ENCODE measurements at regions of chr22 and their contacts with region 1.

Region 1: GRCh38 chr22:41832553-41833368 is at the start of gene SREBF2:
- DNase-seq: peak; percentile 93 to 99 (median 97)
- ATAC-seq: peak; percentile 96
- H3K4me3 ChIP-seq: peak within 1 kb of the TSS; percentile 99
- H3K4me3 Mint-ChIP-seq: peak within 1 kb of the TSS; percentile 90 to 98 (median 95)
- H3K27ac ChIP-seq: peak within 1 kb of the TSS; percentile 97
- H3K27ac Mint-ChIP-seq: peak within 1 kb of the TSS; percentile 94 to 100 (median 99)
- H3K4me1 ChIP-seq: peaks cover 0 to 10% of the 10 kb centered on the region in 2 donors
- H3K4me1 Mint-ChIP-seq: peaks cover 15 to 54% (median 30%) of the 10 kb centered on the region in 7 donors
- H3K27me3 ChIP-seq: no peaks in the 10 kb centered on the region
- H3K27me3 Mint-ChIP-seq: peaks cover 0 to 2% (median 0%) of the 10 kb centered on the region in 5 donors
- total RNA-seq, gene SREBF2: 71.5 to 117 (median 101) TPM

Region 2: DNA sequence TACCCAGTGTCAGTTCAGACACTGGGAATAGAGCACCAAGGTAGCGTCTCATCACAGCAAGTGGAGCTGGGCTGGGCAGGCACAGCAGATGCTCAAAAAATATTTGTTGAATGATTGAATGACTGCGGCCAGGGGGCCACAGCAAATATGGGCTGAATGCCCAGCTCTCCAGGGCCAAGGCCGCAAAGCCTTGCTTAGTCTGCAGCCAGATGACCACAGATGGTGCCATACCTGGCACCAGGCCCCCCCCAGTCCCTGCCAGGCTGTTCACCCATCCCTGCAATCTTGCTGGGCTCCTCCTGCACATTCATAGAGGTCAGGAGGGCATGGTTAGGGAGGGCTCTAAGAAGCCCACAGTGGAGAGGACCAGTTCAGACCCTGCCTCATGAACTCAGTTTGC is 498.5 kb before region 1 on chr22:
- CTCF ChIA-PET with region 1: no interaction called
- POLR2A ChIA-PET with region 1: no interaction called
- intact Hi-C with region 1: no loop called
- DNase-seq: no peak
- ATAC-seq: no peak
- H3K4me3 ChIP-seq: no peak overlapping the region
- H3K4me3 Mint-ChIP-seq: no peak overlapping the region
- H3K27ac ChIP-seq: no peak overlapping the region
- H3K27ac Mint-ChIP-seq: peak overlapping the region in 1 of 9 donors; percentile 13
- H3K4me1 ChIP-seq: no peaks in the 10 kb centered on the region
- H3K4me1 Mint-ChIP-seq: peaks cover 8 to 26% (median 14%) of the 10 kb centered on the region in 7 donors
- H3K27me3 ChIP-seq: no peaks in the 10 kb centered on the region
- H3K27me3 Mint-ChIP-seq: no peaks in the 10 kb centered on the region

Region 3: DNA sequence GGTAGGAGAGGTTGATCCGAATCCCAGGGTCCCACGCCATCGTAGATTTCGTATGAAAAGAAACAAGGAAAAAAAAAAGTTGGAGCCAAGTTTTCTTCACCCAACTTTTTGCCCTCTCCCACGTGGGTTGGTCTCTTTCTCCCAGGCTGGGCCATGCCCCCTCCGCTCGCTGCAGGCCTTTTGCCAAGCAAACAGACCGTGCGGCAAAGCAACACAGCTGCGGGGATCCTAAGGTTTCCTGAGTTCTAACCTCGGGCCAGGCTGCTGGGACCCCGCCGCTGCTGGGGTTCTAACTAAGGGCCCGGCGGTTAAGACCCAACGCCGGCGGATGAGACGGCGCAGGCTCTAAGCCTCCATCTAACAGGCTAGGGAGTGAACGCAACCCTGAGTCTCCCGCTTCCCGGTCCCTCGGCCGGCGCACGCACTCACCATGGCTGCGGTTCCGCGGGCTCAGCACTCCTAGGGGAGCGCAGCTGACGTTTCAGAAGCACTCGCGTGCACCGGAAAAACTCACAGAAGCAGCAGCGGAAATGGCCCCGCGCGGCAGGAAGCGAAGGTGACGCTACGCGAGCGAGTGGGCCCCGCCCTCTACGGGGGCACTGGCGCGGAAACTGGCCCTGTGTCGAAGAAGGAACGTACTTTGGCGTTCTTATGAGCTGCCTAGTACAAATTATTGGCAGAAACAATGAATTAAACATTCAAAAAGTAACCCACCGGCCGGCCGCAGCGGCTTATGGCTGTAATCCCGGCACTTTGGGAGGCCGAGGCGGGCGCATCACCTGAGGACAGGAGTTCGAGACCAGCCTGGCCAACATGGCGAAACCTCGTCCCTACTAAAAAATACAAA is 144.2 kb before region 1 on chr22 and contains the start of gene SNU13:
- CTCF ChIA-PET with region 1: no interaction called
- POLR2A ChIA-PET with region 1: interaction called, 4 read pairs
- intact Hi-C with region 1: loop called in 1 of 2 experiments (anchors 2 kb)
- DNase-seq: peak; percentile 79 to 94 (median 92)
- ATAC-seq: peak; percentile 97
- H3K4me3 ChIP-seq: peak within 1 kb of the TSS; percentile 98
- H3K4me3 Mint-ChIP-seq: peak within 1 kb of the TSS; percentile 90 to 100 (median 96)
- H3K27ac ChIP-seq: peak within 1 kb of the TSS; percentile 95
- H3K27ac Mint-ChIP-seq: peak within 1 kb of the TSS; percentile 94 to 100 (median 99)
- H3K4me1 ChIP-seq: peaks cover 12 to 13% of the 10 kb centered on the region in 2 donors
- H3K4me1 Mint-ChIP-seq: peaks cover 18 to 51% (median 37%) of the 10 kb centered on the region in 7 donors
- H3K27me3 ChIP-seq: no peaks in the 10 kb centered on the region
- H3K27me3 Mint-ChIP-seq: no peaks in the 10 kb centered on the region
- total RNA-seq, gene SNU13: 117 to 180 (median 122) TPM

Region 4: GRCh38 chr22:41822317-41823060 is 10.3 kb before region 1 on chr22:
- CTCF ChIA-PET with region 1: interaction called, 3 read pairs
- POLR2A ChIA-PET with region 1: interaction called, 11 read pairs
- intact Hi-C with region 1: loop called in 1 of 2 experiments (anchors 1 kb)
- DNase-seq: peak in 8 of 9 donors; percentile 30 to 78 (median 70)
- ATAC-seq: peak; percentile 87
- H3K4me3 ChIP-seq: no peak overlapping the region
- H3K4me3 Mint-ChIP-seq: no peak overlapping the region
- H3K27ac ChIP-seq: peak overlapping the region; percentile 4
- H3K27ac Mint-ChIP-seq: peak overlapping the region; percentile 35 to 90 (median 76)
- H3K4me1 ChIP-seq: no peaks in the 10 kb centered on the region
- H3K4me1 Mint-ChIP-seq: peaks cover 5 to 33% (median 15%) of the 10 kb centered on the region in 7 donors
- H3K27me3 ChIP-seq: no peaks in the 10 kb centered on the region
- H3K27me3 Mint-ChIP-seq: no peaks in the 10 kb centered on the region

Region 5: GRCh38 chr22:41857155-41857859 is 24.5 kb after region 1 on chr22:
- CTCF ChIA-PET with region 1: interaction called, 3 read pairs
- POLR2A ChIA-PET with region 1: interaction called, 18 read pairs
- intact Hi-C with region 1: loop called (anchors 1 kb)
- DNase-seq: peak; percentile 27 to 76 (median 65)
- ATAC-seq: peak; percentile 87
- H3K4me3 ChIP-seq: no peak overlapping the region
- H3K4me3 Mint-ChIP-seq: peak overlapping the region; percentile 3 to 67 (median 36)
- H3K27ac ChIP-seq: no peak overlapping the region
- H3K27ac Mint-ChIP-seq: peak overlapping the region; percentile 62 to 91 (median 82)
- H3K4me1 ChIP-seq: peaks cover 17 to 26% of the 10 kb centered on the region in 2 donors
- H3K4me1 Mint-ChIP-seq: peaks cover 33 to 69% (median 54%) of the 10 kb centered on the region in 7 donors
- H3K27me3 ChIP-seq: no peaks in the 10 kb centered on the region
- H3K27me3 Mint-ChIP-seq: no peaks in the 10 kb centered on the region

Region 6: DNA sequence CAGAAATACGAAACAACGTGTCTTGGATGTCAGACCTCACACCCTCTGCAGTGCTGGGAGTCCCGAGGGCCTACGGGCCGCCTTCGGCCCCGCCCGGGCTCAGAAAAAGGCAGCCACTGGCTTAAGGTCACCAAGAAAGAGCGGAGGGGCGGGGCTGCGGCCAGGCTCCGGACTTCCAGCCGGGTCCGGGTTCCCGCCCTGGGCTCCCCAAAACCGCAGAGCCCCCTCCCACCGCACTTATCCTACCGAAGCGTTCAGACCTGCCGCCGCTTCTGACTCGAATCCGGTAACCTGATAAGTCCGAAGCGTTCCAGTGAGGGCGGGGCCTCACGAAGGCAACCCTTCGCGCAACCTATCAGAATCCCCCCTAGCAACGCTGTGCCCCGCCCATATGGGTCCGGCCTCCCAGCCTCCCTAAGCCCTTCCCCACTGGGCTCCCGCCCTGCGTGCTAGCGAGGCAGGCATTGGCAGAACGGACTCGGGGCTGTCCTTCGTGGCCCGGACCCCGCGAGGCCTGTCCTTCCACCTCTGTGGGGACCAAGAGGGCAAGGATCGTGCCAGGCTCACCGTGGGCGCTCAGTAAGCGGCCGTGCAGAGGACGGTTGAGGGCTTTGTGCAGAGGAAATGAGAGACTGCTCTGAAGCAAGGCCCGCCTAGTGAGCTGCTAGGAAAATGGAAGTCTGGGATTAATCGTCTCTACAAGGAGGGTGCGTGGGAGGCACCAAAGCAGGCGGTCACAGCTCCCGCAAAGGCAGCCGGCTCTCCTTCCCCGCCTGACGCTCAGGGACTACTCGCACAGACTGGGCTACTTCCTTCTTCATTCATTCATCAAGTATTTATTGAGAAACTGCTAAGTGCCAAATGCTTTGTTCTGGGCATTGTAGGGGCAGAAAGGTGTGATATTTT is 238.0 kb after region 1 on chr22 and contains the start of gene NAGA:
- CTCF ChIA-PET with region 1: no interaction called
- POLR2A ChIA-PET with region 1: interaction called, 3 read pairs
- intact Hi-C with region 1: loop called (anchors 2 to 10 kb)
- DNase-seq: peak; percentile 79 to 91 (median 88)
- ATAC-seq: peak; percentile 99
- H3K4me3 ChIP-seq: peak within 1 kb of the TSS; percentile 75
- H3K4me3 Mint-ChIP-seq: peak within 1 kb of the TSS; percentile 86 to 96 (median 94)
- H3K27ac ChIP-seq: peak within 1 kb of the TSS; percentile 75
- H3K27ac Mint-ChIP-seq: peak within 1 kb of the TSS; percentile 81 to 94 (median 92)
- H3K4me1 ChIP-seq: peaks cover 16 to 22% of the 10 kb centered on the region in 2 donors
- H3K4me1 Mint-ChIP-seq: peaks cover 22 to 54% (median 45%) of the 10 kb centered on the region in 7 donors
- H3K27me3 ChIP-seq: no peaks in the 10 kb centered on the region
- H3K27me3 Mint-ChIP-seq: no peaks in the 10 kb centered on the region
- total RNA-seq, gene NAGA: 7.6 to 38.8 (median 9.4) TPM